ENCODE measurements at regions of chr18 and their contacts with region 1.

Region 1: GRCh38 chr18:9066817-9067306 is 35.6 kb upstream of the NDUFV2 start:
- H3K4me3 ChIP-seq: no peak overlapping the region
- H3K27ac ChIP-seq: no peak overlapping the region
- H3K4me1 ChIP-seq: no peaks in the 10 kb centered on the region
- CTCF ChIP-seq: no peak

Region 2: DNA sequence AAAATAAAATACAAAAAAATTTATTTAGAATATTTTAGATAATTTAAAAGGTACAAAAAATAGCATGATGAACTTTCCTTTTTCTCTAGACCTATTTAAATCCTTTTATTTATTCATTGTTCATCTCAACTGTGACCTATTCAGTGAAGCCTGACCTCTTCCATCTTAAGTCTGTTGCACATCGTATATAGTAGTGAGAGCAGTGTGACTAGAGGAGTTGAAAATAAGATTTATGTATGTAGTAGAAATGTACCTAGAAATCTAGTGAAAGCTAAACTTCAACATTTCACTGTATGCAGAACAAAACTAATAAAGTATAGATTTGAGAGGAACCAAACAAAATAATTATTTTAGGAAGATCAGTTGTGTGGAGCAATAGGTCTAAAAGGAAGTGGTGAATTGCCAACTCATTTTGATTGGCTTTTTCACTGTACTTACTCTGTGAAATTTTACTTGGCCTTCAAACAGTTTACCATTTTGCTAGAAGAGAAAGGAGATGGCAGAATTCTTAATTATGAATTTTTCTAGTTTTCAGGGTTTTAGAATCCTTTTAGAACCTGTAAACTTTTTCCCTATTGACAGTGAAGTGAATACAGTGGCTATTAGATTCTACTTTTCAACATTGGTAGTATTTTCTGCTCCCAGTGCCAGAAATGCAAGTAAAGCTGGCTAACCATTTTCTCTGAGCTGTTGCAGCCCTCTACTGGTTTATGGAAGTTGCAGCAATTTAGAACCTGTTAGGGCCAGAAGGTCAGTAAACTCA is 80.8 kb after region 1 on chr18:
- CTCF ChIA-PET with region 1: interaction called, 10 read pairs
- POLR2A ChIA-PET with region 1: no interaction called
- H3K4me3 ChIP-seq: no peak overlapping the region
- H3K27ac ChIP-seq: no peak overlapping the region
- H3K4me1 ChIP-seq: peaks cover 4% of the 10 kb centered on the region; the same call in 1 of the 2 replicates
- CTCF ChIP-seq: peak; percentile 53